GM12878 (cell line): ENCODE measurements at regions of chr15 and their contacts with region 1.

Region 1: DNA sequence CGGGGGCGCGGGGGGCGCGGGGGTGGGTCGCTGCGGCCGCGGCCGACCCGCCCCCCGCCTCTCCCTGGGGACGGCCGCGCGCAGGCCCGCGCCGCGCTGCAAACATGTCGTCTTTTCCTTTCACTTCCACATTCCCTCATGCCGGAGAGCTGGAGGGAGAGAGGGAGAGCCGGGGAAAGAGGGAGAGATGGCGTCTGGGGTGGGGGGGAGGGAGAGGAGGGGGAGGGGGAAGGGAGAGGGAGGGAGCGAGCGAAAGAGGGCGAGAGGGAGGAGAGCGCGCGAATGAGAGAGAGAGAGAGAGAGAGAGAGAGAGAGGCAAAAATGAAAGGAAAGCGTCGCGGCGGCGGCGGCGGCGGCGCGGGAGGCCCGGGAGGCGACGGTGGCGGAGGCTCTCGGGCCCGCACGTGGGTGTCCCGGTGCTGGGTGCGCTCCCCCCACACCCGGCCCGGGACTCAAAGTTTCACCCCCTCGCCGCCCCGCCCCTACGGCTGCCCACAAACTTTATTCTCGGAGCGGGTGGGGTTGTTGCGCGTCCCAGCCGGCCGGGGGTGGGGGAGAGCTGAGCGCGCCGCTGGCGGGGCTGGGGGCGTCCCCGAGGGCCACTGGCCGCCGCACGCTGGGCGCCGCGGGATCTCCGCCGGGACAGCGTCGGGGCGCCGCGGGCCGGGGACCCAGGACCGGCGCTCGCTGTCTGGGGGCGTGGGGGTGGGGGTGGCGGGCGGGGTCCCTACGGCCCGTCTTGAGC is 731 bp downstream of the ZNF710 start:
- DNase-seq: no peak
- ATAC-seq: peak; percentile 40
- H3K4me3 ChIP-seq: peak overlapping the region; percentile 79
- H3K27ac ChIP-seq: peak overlapping the region; percentile 85
- H3K4me1 ChIP-seq: peaks cover 25% of the 10 kb centered on the region
- H3K27me3 ChIP-seq: no peaks in the 10 kb centered on the region
- CTCF ChIP-seq: no peak
- EP300 ChIP-seq: no peak
- POLR2A ChIP-seq: peak; percentile 59
- RAD21 ChIP-seq: no peak

Region 2: DNA sequence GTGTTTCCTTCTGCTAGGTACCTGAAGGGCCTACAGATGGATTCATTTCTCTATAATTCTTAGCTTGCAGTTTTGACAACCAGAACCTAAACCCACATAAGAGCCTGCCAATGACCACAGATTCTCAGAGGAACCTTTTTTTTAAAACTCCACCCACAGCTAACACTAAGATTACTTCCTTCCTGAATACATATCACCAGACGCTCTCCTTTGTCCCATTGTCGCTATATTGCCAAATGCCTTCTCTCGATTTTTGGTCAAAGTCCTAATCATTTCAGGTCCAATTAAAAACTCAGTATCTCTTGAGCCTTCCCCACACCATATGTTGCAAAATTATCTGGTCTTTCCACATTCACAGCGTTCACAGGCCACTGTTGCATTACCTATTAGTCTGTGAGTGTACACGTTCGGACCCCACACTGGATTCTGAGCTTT is 11.7 kb after region 1 on chr15:
- CTCF ChIA-PET with region 1: interaction called, 10 read pairs
- POLR2A ChIA-PET with region 1: interaction called, 9 read pairs
- RAD21 ChIA-PET with region 1: interaction called, 17 read pairs
- SMC1A ChIA-PET with region 1: interaction called, 23 read pairs
- in situ Hi-C with region 1: no loop called
- intact Hi-C with region 1: no loop called
- DNase-seq: no peak
- ATAC-seq: peak; percentile 58
- H3K4me3 ChIP-seq: 0 out of 2 replicates have a peak overlapping the region, but pooled peaks have one; percentile 34
- H3K27ac ChIP-seq: peak overlapping the region; percentile 15
- H3K4me1 ChIP-seq: peaks cover 16% of the 10 kb centered on the region
- H3K27me3 ChIP-seq: no peaks in the 10 kb centered on the region
- CTCF ChIP-seq: no peak
- EP300 ChIP-seq: no peak
- POLR2A ChIP-seq: no peak
- RAD21 ChIP-seq: no peak

Region 3: DNA sequence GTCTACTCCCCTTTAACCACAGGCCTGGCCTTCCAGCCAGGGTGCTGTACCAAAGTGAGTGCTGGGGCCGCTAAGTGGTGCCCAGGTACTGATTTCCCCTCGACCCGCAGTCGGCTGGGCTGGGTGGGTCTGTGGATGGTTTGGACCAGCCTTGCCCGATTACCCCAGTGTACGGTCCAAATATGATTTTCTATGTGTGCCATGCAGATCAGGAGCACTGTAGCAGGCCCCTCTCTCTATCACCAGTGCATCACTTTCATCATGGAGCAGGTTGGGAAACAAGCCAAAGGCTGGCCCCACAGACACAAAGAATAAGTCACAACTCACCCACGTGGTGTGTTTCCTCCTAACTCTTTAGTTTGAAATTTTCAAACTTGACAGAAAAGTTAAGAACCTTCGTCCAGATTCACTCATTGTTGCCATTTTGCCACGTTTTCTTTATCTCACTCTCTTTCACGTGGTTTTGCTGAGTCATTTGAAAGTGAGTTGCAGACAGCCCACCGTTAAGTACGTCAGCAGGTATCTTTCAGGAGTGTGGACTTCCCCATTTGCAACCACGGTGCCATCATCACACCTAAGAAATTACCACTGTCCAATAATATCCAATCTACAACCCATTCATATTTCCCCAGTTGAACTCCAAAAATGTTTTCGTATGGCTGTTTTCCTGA is 36.2 kb after region 1 on chr15:
- CTCF ChIA-PET with region 1: interaction called, 15 read pairs
- POLR2A ChIA-PET with region 1: interaction called, 56 read pairs
- RAD21 ChIA-PET with region 1: interaction called, 39 read pairs
- SMC1A ChIA-PET with region 1: interaction called, 224 read pairs
- in situ Hi-C with region 1: no loop called
- intact Hi-C with region 1: loop called (anchors 2 kb)
- DNase-seq: peak; percentile 89
- ATAC-seq: peak; percentile 87
- H3K4me3 ChIP-seq: no peak overlapping the region
- H3K27ac ChIP-seq: peak overlapping the region; percentile 87
- H3K4me1 ChIP-seq: peaks cover 56% of the 10 kb centered on the region
- H3K27me3 ChIP-seq: no peaks in the 10 kb centered on the region
- CTCF ChIP-seq: no peak
- EP300 ChIP-seq: peak; percentile 99 to 100
- POLR2A ChIP-seq: no peak
- RAD21 ChIP-seq: no peak

Region 4: GRCh38 chr15:90059208-90059985 is 57.5 kb after region 1 on chr15:
- CTCF ChIA-PET with region 1: no interaction called
- POLR2A ChIA-PET with region 1: interaction called, 7 read pairs
- RAD21 ChIA-PET with region 1: interaction called, 4 read pairs
- SMC1A ChIA-PET with region 1: interaction called, 15 read pairs
- in situ Hi-C with region 1: no loop called
- intact Hi-C with region 1: no loop called
- DNase-seq: peak; percentile 97
- ATAC-seq: peak; percentile 94
- H3K4me3 ChIP-seq: peak overlapping the region; percentile 33; the same call in 1 of the 2 replicates
- H3K27ac ChIP-seq: peak overlapping the region; percentile 91
- H3K4me1 ChIP-seq: peaks cover 60% of the 10 kb centered on the region
- H3K27me3 ChIP-seq: no peaks in the 10 kb centered on the region
- CTCF ChIP-seq: no peak
- EP300 ChIP-seq: peak; percentile 90 to 96
- POLR2A ChIP-seq: peak; percentile 80
- RAD21 ChIP-seq: peak; percentile 20; the same call in 1 of the 2 replicates

Region 5: GRCh38 chr15:90101969-90102890 is 100.4 kb after region 1 on chr15 and contains the start of gene IDH2:
- CTCF ChIA-PET with region 1: interaction called, 11 read pairs
- POLR2A ChIA-PET with region 1: interaction called, 13 read pairs
- RAD21 ChIA-PET with region 1: interaction called, 10 read pairs
- SMC1A ChIA-PET with region 1: interaction called, 10 read pairs
- in situ Hi-C with region 1: no loop called
- intact Hi-C with region 1: loop called (anchors 5 kb)
- DNase-seq: no peak
- ATAC-seq: peak; percentile 76
- H3K4me3 ChIP-seq: peak within 1 kb of the TSS; percentile 79
- H3K27ac ChIP-seq: peak within 1 kb of the TSS; percentile 91
- H3K4me1 ChIP-seq: peaks cover 34% of the 10 kb centered on the region
- H3K27me3 ChIP-seq: no peaks in the 10 kb centered on the region
- CTCF ChIP-seq: no peak
- EP300 ChIP-seq: no peak
- POLR2A ChIP-seq: peak; percentile 91
- RAD21 ChIP-seq: no peak
- polyA plus RNA-seq, gene IDH2: 2.3 to 15.4 TPM